ENCODE measurements at regions of chr11 and their contacts with region 1.

Region 1: GRCh38 chr11:65134386-65135253 is at the start of gene SYVN1:
- DNase-seq: peak; percentile 98
- H3K4me3 ChIP-seq: peak within 1 kb of the TSS; percentile 84 to 96 (median 94)
- H3K27ac ChIP-seq: peak within 1 kb of the TSS; percentile 94 to 98 (median 98)
- H3K4me1 ChIP-seq: peaks cover 26 to 39% (median 32%) of the 10 kb centered on the region in 4 donors
- H3K27me3 ChIP-seq: no peaks in the 10 kb centered on the region
- CTCF ChIP-seq: no peak
- EP300 ChIP-seq: no peak
- POLR2A ChIP-seq: peak; percentile 94
- total RNA-seq, gene SYVN1: 24.1 to 39.5 (median 27.5) TPM

Region 2: GRCh38 chr11:65078151-65078550 is 56.5 kb before region 1 on chr11:
- intact Hi-C with region 1: no loop called
- DNase-seq: no peak
- H3K4me3 ChIP-seq: no peak overlapping the region
- H3K27ac ChIP-seq: no peak overlapping the region
- H3K4me1 ChIP-seq: peaks cover 0 to 2% (median 1%) of the 10 kb centered on the region in 4 donors
- H3K27me3 ChIP-seq: no peaks in the 10 kb centered on the region
- CTCF ChIP-seq: peak; percentile 29 to 56 (median 39)
- EP300 ChIP-seq: no peak
- POLR2A ChIP-seq: no peak

Region 3: GRCh38 chr11:65180877-65181568 is 46.4 kb after region 1 on chr11:
- intact Hi-C with region 1: loop called (anchors 5 kb)
- DNase-seq: no peak
- H3K4me3 ChIP-seq: peak overlapping the region; percentile 81 to 91 (median 87)
- H3K27ac ChIP-seq: peak overlapping the region; percentile 85 to 97 (median 91)
- H3K4me1 ChIP-seq: peaks cover 19 to 41% (median 34%) of the 10 kb centered on the region in 4 donors
- H3K27me3 ChIP-seq: no peaks in the 10 kb centered on the region
- CTCF ChIP-seq: peak in 2 of 3 experiments; percentile 22 to 55
- EP300 ChIP-seq: no peak
- POLR2A ChIP-seq: no peak